CD4-positive, alpha-beta T cell (primary cell): ENCODE measurements at regions of chr3 and their contacts with region 1.

Region 1: DNA sequence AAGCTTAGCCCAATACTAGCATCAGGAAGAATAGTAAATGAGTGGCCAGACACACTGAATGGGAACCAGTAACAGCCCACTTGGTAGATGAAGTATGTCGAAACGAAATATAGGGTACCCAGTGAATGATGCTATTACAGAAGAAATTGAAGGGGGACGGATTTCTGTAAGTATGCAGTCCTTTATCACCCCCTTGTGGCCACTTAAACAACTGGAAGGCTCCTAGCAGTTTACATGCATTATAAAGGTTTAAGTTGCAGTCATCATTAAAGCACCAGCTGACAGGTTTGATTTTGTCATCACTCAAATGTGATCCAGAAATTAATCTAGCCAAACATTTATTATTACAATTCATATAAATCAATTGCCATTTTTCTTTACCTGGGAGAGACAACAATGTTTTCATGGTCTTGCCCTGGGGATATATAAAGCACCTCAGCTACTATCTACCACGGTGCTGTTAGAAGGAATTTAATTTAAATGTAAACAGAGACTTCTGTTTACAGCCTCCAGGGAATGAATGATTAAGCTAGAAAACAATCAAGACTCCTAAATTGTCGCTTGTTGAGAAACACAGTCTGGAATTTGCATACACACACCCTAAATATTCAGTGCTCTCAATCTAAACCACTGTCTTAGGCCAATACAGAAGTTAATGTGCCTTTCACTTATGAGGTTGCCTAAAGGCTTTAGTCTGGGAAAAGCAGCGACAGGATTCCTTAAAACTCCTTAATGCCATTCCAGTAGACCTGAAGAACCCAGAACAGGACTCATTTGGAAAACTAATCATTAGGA is 7.8 kb downstream of the EIF1B start:
- DNase-seq: peak in 11 of 14 experiments; percentile 5 to 83 (median 26)
- ATAC-seq: peak; percentile 92
- H3K4me3 ChIP-seq: no peak overlapping the region
- H3K4me3 Mint-ChIP-seq: no peak overlapping the region
- H3K27ac ChIP-seq: no peak overlapping the region
- H3K27ac Mint-ChIP-seq: no peak overlapping the region
- H3K4me1 ChIP-seq: no peaks in the 10 kb centered on the region
- H3K4me1 Mint-ChIP-seq: peaks cover 16% of the 10 kb centered on the region
- H3K27me3 ChIP-seq: no peaks in the 10 kb centered on the region
- H3K27me3 Mint-ChIP-seq: no peaks in the 10 kb centered on the region
- CTCF ChIP-seq: peak; percentile 82

Region 2: GRCh38 chr3:39707314-39707909 is 609.8 kb before region 1 on chr3:
- CTCF ChIA-PET with region 1: no interaction called
- POLR2A ChIA-PET with region 1: no interaction called
- intact Hi-C with region 1: loop called in 1 of 2 experiments (anchors 5 kb)
- DNase-seq: peak in 3 of 14 experiments; percentile 11 to 20 (median 18)
- ATAC-seq: no peak
- H3K4me3 ChIP-seq: no peak overlapping the region
- H3K4me3 Mint-ChIP-seq: no peak overlapping the region
- H3K27ac ChIP-seq: no peak overlapping the region
- H3K27ac Mint-ChIP-seq: no peak overlapping the region
- H3K4me1 ChIP-seq: no peaks in the 10 kb centered on the region
- H3K4me1 Mint-ChIP-seq: no peaks in the 10 kb centered on the region
- H3K27me3 ChIP-seq: peaks cover 0 to 4% of the 10 kb centered on the region in 2 experiments
- H3K27me3 Mint-ChIP-seq: peaks cover 19% of the 10 kb centered on the region
- CTCF ChIP-seq: peak; percentile 57

Region 3: GRCh38 chr3:40237889-40238571 is 79.2 kb before region 1 on chr3:
- CTCF ChIA-PET with region 1: no interaction called
- POLR2A ChIA-PET with region 1: no interaction called
- intact Hi-C with region 1: no loop called
- DNase-seq: no peak
- ATAC-seq: no peak
- H3K4me3 ChIP-seq: no peak overlapping the region
- H3K4me3 Mint-ChIP-seq: no peak overlapping the region
- H3K27ac ChIP-seq: no peak overlapping the region
- H3K27ac Mint-ChIP-seq: no peak overlapping the region
- H3K4me1 ChIP-seq: no peaks in the 10 kb centered on the region
- H3K4me1 Mint-ChIP-seq: no peaks in the 10 kb centered on the region
- H3K27me3 ChIP-seq: no peaks in the 10 kb centered on the region
- H3K27me3 Mint-ChIP-seq: no peaks in the 10 kb centered on the region
- CTCF ChIP-seq: no peak

Region 4: GRCh38 chr3:40713795-40714194 is 396.5 kb after region 1 on chr3:
- CTCF ChIA-PET with region 1: no interaction called
- POLR2A ChIA-PET with region 1: no interaction called
- intact Hi-C with region 1: no loop called
- DNase-seq: no peak
- ATAC-seq: no peak
- H3K4me3 ChIP-seq: no peak overlapping the region
- H3K4me3 Mint-ChIP-seq: no peak overlapping the region
- H3K27ac ChIP-seq: no peak overlapping the region
- H3K27ac Mint-ChIP-seq: no peak overlapping the region
- H3K4me1 ChIP-seq: no peaks in the 10 kb centered on the region
- H3K4me1 Mint-ChIP-seq: no peaks in the 10 kb centered on the region
- H3K27me3 ChIP-seq: peaks cover 8 to 10% of the 10 kb centered on the region in 2 experiments
- H3K27me3 Mint-ChIP-seq: peaks cover 35% of the 10 kb centered on the region
- CTCF ChIP-seq: no peak